Activated CD4-positive, alpha-beta memory T cell treated with anti-CD3 and anti-CD28 coated beads, Interleukin-2, amount 10 ng/mL, durations not matched to agents 7 days and 5 days (primary cell): ENCODE measurements at regions of chr6 and their contacts with region 1.

Region 1: GRCh38 chr6:118934461-118935330 is at the start of gene MCM9:
- DNase-seq: peak; percentile 89
- H3K4me3 Mint-ChIP-seq: peak within 1 kb of the TSS; percentile 81
- H3K27ac Mint-ChIP-seq: peak within 1 kb of the TSS; percentile 85
- H3K4me1 Mint-ChIP-seq: peaks cover 28% of the 10 kb centered on the region
- H3K27me3 Mint-ChIP-seq: no peaks in the 10 kb centered on the region
- total RNA-seq, gene MCM9: 14.8 to 15.7 TPM

Region 2: GRCh38 chr6:118921084-118921483 is 13.6 kb before region 1 on chr6:
- CTCF ChIA-PET with region 1: no interaction called
- POLR2A ChIA-PET with region 1: interaction called, 11 read pairs
- DNase-seq: no peak
- H3K4me3 Mint-ChIP-seq: no peak overlapping the region
- H3K27ac Mint-ChIP-seq: no peak overlapping the region
- H3K4me1 Mint-ChIP-seq: no peaks in the 10 kb centered on the region
- H3K27me3 Mint-ChIP-seq: no peaks in the 10 kb centered on the region